ENCODE measurements at regions of chr12 and their contacts with region 1.

Region 1: GRCh38 chr12:7695237-7696197 is at the start of gene GDF3:
- DNase-seq: peak in 1 of 2 donors; percentile 34
- ATAC-seq: peak; percentile 44 to 89 (median 74)
- H3K4me3 ChIP-seq: peak within 1 kb of the TSS in 1 of 10 donors; percentile 27
- H3K27ac ChIP-seq: peak within 1 kb of the TSS in 3 of 10 donors; percentile 38 to 57 (median 38)
- H3K4me1 ChIP-seq: peaks cover 0 to 19% (median 11%) of the 10 kb centered on the region in 9 donors
- H3K27me3 ChIP-seq: peaks cover 0 to 12% (median 0%) of the 10 kb centered on the region in 7 donors
- CTCF ChIP-seq: no peak
- total RNA-seq, gene GDF3: 0.20 to 0.25 (median 0.21) TPM in 3 of 10 donors, not detected in the others

Region 2: DNA sequence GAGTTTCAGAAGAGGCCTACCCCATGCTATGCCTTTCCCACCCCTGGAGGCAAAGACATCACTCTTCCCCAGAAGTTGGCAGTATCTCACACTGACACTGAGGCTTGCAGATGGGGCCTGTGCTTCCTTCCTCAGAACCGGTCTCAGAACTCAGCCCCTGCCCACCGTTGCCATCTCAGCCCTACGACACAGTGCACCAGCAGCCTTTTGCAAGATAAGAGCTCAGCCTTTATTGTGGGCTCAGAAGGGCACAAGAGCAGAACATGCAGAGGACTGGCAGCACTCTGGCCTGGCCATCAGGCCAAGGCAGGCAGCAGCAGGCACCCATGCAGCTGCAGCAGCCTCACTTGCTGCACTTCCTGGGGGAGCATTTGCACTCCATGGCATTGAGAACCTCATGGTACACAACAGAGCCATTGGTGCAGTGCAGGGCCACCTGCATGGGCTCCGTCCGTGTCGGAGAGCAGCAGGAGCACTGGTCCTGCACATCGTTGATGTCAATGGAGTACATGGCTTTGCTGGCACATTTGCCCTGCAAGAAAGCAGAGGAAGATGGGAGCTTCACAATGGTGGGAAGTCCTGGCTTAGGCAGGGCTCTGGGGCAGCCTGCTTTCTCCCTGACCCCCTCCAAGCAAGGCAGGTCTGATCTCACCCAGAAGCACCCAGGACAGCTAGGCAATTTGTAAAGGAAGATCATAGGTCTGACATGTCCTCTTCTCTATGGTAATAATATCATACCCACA is 1746.7 kb before region 1 on chr12:
- intact Hi-C with region 1: no loop called
- DNase-seq: no peak
- ATAC-seq: no peak
- H3K4me3 ChIP-seq: no peak overlapping the region
- H3K27ac ChIP-seq: no peak overlapping the region
- H3K4me1 ChIP-seq: peaks cover 0 to 15% (median 8%) of the 10 kb centered on the region in 9 donors
- H3K27me3 ChIP-seq: peaks cover 0 to 56% (median 40%) of the 10 kb centered on the region in 7 donors
- CTCF ChIP-seq: no peak

Region 3: DNA sequence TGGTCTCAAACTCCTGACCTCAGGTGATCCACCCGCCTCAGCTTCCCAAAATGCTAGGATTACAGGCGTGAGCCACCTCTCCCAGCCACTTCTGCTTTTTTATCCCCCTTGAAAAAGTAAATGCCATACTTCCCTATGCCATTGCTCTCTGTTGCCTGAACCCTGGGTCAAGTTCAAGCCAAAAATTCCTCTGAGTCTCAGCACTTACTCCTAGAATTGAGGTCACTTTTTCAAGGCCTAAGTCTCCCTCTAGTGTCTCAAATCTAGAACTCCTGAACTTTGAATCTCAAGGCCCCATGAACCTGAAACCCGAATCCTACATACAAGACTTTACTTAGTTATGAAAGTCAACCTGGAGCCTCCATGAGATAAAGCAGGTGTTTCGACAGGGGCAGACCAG is 28.4 kb before region 1 on chr12:
- intact Hi-C with region 1: loop called in 1 of 10 experiments (anchors 1 kb)
- DNase-seq: no peak
- ATAC-seq: no peak
- H3K4me3 ChIP-seq: no peak overlapping the region
- H3K27ac ChIP-seq: no peak overlapping the region
- H3K4me1 ChIP-seq: no peaks in the 10 kb centered on the region
- H3K27me3 ChIP-seq: no peaks in the 10 kb centered on the region
- CTCF ChIP-seq: no peak